ENCODE measurements at regions of chr1 and their contacts with region 1.

Region 1: DNA sequence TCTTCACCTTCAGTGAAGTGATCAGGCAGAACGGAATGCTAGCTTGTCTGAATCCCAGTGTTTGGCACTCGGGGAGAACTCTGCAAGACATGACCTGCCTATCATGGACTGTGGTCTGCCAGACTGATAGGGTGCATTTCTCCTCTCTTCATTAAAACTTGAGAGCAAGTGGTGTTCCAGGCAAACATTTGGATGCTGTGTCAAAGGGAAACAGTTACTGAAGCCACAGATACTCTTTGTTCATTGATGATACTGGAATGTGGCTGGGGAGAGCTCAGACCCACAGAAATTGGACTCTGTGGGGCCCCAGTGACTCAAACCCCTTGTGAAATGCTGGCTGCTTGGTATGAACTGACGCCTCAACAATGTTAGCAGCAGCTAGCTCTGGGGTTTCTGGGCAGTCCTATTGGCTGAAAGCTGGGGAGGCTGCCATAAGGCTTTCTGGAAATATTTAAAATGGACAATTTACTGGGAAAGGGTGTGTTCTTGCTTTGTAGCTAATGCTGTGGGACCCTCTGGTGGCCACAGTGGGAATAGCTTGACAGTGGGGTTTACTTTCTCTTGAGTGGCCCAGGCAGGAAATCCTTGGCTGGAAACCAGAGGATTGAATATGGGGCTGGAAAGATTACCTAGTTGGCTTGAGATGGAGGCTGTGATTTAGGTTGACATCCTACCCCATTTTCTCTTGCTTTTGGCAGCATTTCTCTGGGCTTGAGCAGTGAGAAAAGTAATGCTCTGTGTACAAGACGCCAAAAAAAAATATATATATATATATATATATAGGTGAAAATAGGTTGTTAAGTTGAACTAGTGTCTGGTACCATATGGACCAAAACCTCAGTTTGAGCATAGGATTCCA is 8.0 kb upstream of the S100A10 start:
- DNase-seq: peak; percentile 88
- ATAC-seq: peak; percentile 79
- H3K4me3 Mint-ChIP-seq: no peak overlapping the region
- H3K27ac Mint-ChIP-seq: no peak overlapping the region
- H3K4me1 Mint-ChIP-seq: peaks cover 21% of the 10 kb centered on the region
- H3K27me3 Mint-ChIP-seq: peaks cover 26% of the 10 kb centered on the region

Region 2: GRCh38 chr1:151888972-151889570 is 112.5 kb before region 1 on chr1:
- CTCF ChIA-PET with region 1: interaction called, 31 read pairs
- DNase-seq: no peak
- ATAC-seq: peak; percentile 42
- H3K4me3 Mint-ChIP-seq: no peak overlapping the region
- H3K27ac Mint-ChIP-seq: no peak overlapping the region
- H3K4me1 Mint-ChIP-seq: peaks cover 19% of the 10 kb centered on the region
- H3K27me3 Mint-ChIP-seq: no peaks in the 10 kb centered on the region

Region 3: GRCh38 chr1:151934048-151934493 is 67.5 kb before region 1 on chr1:
- CTCF ChIA-PET with region 1: interaction called, 230 read pairs
- DNase-seq: peak; percentile 58
- ATAC-seq: peak; percentile 92
- H3K4me3 Mint-ChIP-seq: no peak overlapping the region
- H3K27ac Mint-ChIP-seq: no peak overlapping the region
- H3K4me1 Mint-ChIP-seq: peaks cover 2% of the 10 kb centered on the region
- H3K27me3 Mint-ChIP-seq: peaks cover 4% of the 10 kb centered on the region

Region 4: GRCh38 chr1:151968058-151968457 is 33.6 kb before region 1 on chr1:
- CTCF ChIA-PET with region 1: interaction called, 522 read pairs
- DNase-seq: peak; percentile 75
- ATAC-seq: peak; percentile 92
- H3K4me3 Mint-ChIP-seq: no peak overlapping the region
- H3K27ac Mint-ChIP-seq: peak overlapping the region; percentile 47
- H3K4me1 Mint-ChIP-seq: peaks cover 17% of the 10 kb centered on the region
- H3K27me3 Mint-ChIP-seq: peaks cover 12% of the 10 kb centered on the region

Region 5: DNA sequence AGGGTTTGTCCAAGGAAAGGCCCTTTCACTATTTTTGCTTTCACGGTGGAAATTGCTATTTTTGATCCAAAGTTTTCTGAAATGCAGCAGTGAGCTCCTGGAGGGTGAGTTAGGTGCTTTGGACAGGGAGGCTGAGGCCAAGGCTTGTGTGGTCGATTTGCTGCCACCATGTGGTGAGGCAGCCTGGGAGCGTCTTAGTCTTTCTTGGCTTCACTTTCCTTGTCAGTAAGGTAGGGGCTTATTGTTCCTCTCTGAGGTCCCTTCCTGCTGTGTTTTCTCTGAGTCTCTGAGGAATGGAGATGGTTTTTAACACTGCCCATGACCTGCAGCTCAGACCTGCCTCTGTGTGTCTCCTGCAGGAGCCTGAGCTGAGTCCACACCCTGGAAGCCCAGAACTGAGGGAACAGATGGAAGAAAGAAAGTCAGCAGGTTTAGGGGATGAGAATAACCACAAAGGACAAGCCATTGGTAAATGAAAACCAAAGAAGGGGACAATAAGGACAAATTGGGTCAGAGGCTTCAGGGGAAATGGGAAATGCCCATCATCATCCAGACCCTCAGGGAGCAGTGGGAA is 12.1 kb after region 1 on chr1:
- CTCF ChIA-PET with region 1: interaction called, 55 read pairs
- DNase-seq: peak; percentile 72
- ATAC-seq: peak; percentile 51
- H3K4me3 Mint-ChIP-seq: no peak overlapping the region
- H3K27ac Mint-ChIP-seq: no peak overlapping the region
- H3K4me1 Mint-ChIP-seq: peaks cover 5% of the 10 kb centered on the region
- H3K27me3 Mint-ChIP-seq: peaks cover 21% of the 10 kb centered on the region